ENCODE measurements at regions of chr11 and their contacts with region 1.

Region 1: GRCh38 chr11:130435671-130436070 is 7.3 kb upstream of the ADAMTS8 start:
- DNase-seq: no peak
- ATAC-seq: no peak
- H3K4me3 ChIP-seq: no peak overlapping the region
- H3K27ac ChIP-seq: no peak overlapping the region
- H3K4me1 ChIP-seq: peaks cover 8% of the 10 kb centered on the region
- H3K27me3 ChIP-seq: no peaks in the 10 kb centered on the region
- CTCF ChIP-seq: no peak

Region 2: DNA sequence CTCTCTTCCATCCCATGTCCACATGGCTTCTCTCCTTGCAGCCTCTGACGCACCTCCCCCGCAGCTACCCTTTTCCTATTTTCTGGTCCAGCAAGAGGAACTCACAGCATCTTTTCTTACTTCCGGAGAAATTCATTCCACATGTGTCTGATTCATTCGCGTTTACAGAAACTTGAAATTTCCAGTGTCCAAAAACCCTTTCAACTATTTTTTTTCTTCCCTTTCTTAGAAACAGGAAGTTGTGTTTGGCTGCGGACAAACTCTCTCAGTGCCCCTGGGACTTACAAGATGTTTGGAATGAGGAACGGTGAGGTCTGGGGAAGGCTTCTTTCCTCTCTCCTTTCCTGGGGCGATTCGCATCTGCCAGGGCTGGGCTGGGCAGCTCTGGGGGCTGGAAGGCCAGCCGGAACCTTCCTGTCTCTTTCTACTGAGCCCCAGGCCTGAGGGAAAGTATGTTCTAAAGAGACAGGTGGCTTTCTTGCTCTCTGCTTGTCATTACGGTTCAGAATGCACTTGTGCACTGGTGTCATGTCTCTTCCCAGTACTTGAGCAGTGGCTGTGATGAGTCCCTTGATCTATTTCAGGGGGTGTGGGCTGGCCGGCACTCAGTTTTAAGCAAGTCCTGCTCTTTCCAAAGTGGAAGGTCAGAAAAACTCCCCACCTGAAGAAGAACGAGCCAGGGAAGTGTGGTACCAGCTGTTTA is 34.7 kb before region 1 on chr11:
- intact Hi-C with region 1: no loop called
- DNase-seq: no peak
- ATAC-seq: no peak
- H3K4me3 ChIP-seq: no peak overlapping the region
- H3K27ac ChIP-seq: peak overlapping the region; percentile 58
- H3K4me1 ChIP-seq: peaks cover 10% of the 10 kb centered on the region
- H3K27me3 ChIP-seq: no peaks in the 10 kb centered on the region
- CTCF ChIP-seq: no peak

Region 3: DNA sequence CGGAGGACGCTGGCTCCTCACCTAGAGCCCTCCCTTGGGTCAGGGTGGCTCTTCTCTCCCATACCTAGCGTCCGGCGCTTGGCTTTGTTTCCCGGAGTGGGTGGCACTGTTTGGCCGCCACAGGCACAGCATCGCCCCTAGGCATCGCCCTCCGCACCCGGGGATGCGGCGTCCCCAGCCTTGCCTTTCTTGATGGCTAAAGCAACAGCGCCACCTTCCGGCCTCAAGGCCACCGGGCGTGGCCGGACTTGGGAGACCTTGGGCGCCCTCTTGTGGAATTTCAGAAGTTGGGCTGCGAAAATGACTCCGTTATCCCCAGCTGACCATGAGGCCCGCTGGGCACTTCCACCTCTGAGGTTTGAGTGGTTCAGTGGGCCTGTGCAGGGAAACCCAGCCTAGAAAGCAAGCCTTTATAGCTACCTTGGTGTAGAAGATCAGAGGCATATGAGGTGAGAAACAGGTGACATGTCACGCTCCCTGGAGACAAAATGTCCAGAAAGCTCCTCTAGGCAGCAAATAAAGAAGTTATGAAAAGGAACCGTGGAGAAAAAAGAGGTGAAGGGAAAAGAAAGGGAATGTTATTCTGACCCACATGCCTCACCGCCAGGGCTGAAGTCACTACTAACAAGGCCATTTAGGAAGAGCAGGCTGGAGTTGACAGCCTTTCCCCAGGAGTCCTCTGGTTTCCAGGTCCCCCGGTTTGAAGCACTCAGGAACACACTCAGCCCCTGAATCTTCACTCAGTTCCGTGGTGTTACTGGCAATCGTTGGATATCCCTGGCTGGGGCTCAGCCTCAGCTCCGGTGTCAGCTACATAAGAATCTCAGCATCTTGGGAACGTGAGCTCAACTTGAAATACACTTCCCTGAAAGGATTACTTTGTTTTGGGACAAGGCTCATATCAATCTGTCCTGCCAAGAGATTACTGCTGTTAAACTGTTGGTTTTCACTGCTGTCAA is 426.5 kb after region 1 on chr11:
- intact Hi-C with region 1: loop called (anchors 2 kb)
- DNase-seq: peak; percentile 93
- ATAC-seq: peak; percentile 96
- H3K4me3 ChIP-seq: no peak overlapping the region
- H3K27ac ChIP-seq: no peak overlapping the region
- H3K4me1 ChIP-seq: peaks cover 15% of the 10 kb centered on the region
- H3K27me3 ChIP-seq: no peaks in the 10 kb centered on the region
- CTCF ChIP-seq: peak; percentile 100

Measured in upper lobe of right lung (tissue), 1 donor.